ENCODE measurements at regions of chr12 and their contacts with region 1.

Region 1: DNA sequence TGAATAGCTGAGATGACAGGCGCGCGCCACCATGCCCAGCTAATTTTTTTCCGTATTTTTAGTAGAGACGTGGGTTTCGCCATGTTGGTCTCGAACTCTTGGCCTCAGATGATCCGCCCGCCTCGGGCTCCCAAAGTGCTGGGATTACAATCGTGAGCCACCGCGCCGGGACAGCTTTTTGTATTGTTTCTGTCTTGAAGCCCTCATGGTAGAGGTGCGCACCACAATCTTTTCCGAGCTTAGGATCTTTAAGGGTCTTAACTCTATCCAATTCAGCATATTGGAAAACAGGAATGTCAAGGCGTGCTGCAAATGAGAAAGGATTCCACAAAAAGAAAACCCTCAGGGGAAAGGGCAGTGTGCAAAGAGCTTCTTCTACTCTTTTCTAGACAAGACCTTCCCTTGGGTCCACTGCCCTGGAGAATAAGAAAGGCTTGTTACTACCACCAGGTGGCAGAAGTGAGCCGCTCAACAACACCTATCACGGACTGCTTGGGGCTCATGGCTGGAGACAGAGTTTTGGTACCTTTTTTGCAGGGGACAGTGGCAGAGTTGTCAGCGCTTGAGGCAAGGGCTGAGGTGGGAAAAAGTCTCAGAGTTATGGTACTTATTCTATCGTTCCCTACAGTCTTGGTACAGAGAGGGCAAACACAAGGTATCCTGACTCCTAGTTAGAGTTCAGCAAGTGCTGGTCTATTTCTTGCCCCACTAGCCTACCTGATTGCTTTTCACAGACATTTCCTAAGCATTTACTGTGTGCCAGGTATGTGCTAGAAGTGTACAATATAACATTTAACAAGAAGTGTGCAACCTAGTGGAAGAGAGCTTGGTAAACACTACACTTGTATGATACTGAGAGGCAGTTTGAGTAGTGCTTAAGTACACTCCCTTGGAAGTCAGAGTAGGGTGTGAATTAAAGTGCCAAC is 16.4 kb upstream of the SP7 start:
- DNase-seq: peak; percentile 84
- H3K4me3 ChIP-seq: no peak overlapping the region
- H3K27ac ChIP-seq: no peak overlapping the region
- H3K4me1 ChIP-seq: peaks cover 2% of the 10 kb centered on the region
- H3K27me3 ChIP-seq: no peaks in the 10 kb centered on the region
- CTCF ChIP-seq: peak; percentile 73 to 79
- POLR2A ChIP-seq: no peak

Region 2: DNA sequence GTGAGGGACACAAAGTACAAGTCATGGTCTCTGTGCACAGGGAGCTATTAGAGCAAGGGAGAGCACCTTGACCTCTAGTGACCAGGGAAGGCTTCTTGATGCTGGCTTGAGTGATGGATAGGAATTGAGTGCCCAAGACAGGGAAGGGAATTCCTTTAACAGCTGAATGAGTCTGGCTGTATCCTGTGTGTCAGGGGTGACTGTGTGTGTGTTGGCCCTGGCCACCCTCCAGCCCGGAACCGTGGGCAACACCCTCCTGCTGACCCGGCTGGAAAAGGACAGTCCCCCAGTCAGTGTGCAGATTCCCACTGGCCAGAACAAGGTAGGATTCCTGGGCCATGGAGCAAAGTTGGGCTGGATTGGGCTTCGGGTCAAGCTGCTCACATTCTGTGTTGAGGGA is 62.7 kb before region 1 on chr12:
- CTCF ChIA-PET with region 1: no interaction called
- POLR2A ChIA-PET with region 1: no interaction called
- dilution Hi-C with region 1: no loop called
- intact Hi-C with region 1: no loop called
- DNase-seq: peak; percentile 33
- H3K4me3 ChIP-seq: no peak overlapping the region
- H3K27ac ChIP-seq: peak overlapping the region; percentile 31
- H3K4me1 ChIP-seq: peaks cover 19% of the 10 kb centered on the region
- H3K27me3 ChIP-seq: no peaks in the 10 kb centered on the region
- CTCF ChIP-seq: no peak
- POLR2A ChIP-seq: no peak

Region 3: GRCh38 chr12:53327435-53328042 is 25.1 kb before region 1 on chr12:
- CTCF ChIA-PET with region 1: interaction called, 41 read pairs
- POLR2A ChIA-PET with region 1: no interaction called
- dilution Hi-C with region 1: no loop called
- intact Hi-C with region 1: no loop called
- DNase-seq: peak; percentile 21
- H3K4me3 ChIP-seq: no peak overlapping the region
- H3K27ac ChIP-seq: no peak overlapping the region
- H3K4me1 ChIP-seq: peaks cover 11% of the 10 kb centered on the region
- H3K27me3 ChIP-seq: peaks cover 0 to 6% of the 10 kb centered on the region in 2 experiments
- CTCF ChIP-seq: peak in 1 of 2 donors; percentile 27
- POLR2A ChIP-seq: no peak

Region 4: GRCh38 chr12:53365245-53365904 is 12.8 kb after region 1 on chr12:
- CTCF ChIA-PET with region 1: interaction called, 46 read pairs
- POLR2A ChIA-PET with region 1: no interaction called
- dilution Hi-C with region 1: no loop called
- intact Hi-C with region 1: no loop called
- DNase-seq: no peak
- H3K4me3 ChIP-seq: no peak overlapping the region
- H3K27ac ChIP-seq: no peak overlapping the region
- H3K4me1 ChIP-seq: peaks cover under 1% of the 10 kb centered on the region
- H3K27me3 ChIP-seq: no peaks in the 10 kb centered on the region
- CTCF ChIP-seq: no peak
- POLR2A ChIP-seq: no peak

Region 5: GRCh38 chr12:53402871-53403270 is 50.3 kb after region 1 on chr12:
- CTCF ChIA-PET with region 1: interaction called, 11 read pairs
- POLR2A ChIA-PET with region 1: no interaction called
- dilution Hi-C with region 1: no loop called
- intact Hi-C with region 1: no loop called
- DNase-seq: no peak
- H3K4me3 ChIP-seq: no peak overlapping the region
- H3K27ac ChIP-seq: no peak overlapping the region
- H3K4me1 ChIP-seq: no peaks in the 10 kb centered on the region
- H3K27me3 ChIP-seq: no peaks in the 10 kb centered on the region
- CTCF ChIP-seq: no peak
- POLR2A ChIP-seq: no peak

Region 6: DNA sequence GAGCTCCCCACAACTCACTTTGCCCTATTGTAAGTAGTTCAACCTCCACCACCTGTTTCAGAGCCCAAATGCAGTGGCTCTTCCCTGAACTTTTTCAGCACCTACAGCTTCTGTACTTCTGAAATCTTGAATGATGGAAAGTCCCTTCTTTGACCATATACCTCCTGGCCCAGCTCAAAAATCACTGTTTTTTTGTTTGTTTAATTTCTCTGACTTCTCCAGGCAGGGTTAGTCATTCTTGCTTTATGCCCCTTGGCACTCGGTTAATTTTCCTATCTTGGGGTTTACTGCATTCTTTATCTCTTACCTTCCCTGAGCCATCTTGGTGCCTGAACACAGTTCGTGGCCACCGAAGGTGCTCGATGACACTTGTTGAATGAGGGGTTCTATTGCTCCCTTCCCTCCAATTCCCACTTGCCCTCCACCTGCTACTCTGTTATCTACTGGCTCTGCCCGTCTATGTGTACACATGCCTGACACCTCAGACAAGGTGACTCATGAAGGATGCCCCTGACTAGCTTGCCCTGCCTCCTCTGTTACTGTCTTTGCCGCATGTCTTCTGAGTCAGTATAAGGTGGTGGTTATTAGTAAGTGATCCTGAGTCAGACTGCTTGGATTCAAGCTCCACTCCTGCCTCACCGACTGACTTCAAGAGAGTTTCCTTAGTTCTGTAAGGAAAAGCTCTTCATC is 75.5 kb after region 1 on chr12:
- CTCF ChIA-PET with region 1: interaction called, 444 read pairs
- POLR2A ChIA-PET with region 1: no interaction called
- dilution Hi-C with region 1: no loop called
- intact Hi-C with region 1: no loop called
- DNase-seq: no peak
- H3K4me3 ChIP-seq: no peak overlapping the region
- H3K27ac ChIP-seq: no peak overlapping the region
- H3K4me1 ChIP-seq: no peaks in the 10 kb centered on the region
- H3K27me3 ChIP-seq: no peaks in the 10 kb centered on the region
- CTCF ChIP-seq: no peak
- POLR2A ChIP-seq: no peak

Region 7: GRCh38 chr12:53476769-53477209 is 124.2 kb after region 1 on chr12:
- CTCF ChIA-PET with region 1: interaction called, 19 read pairs
- POLR2A ChIA-PET with region 1: no interaction called
- dilution Hi-C with region 1: no loop called
- intact Hi-C with region 1: no loop called
- DNase-seq: peak; percentile 36
- H3K4me3 ChIP-seq: no peak overlapping the region
- H3K27ac ChIP-seq: no peak overlapping the region
- H3K4me1 ChIP-seq: no peaks in the 10 kb centered on the region
- H3K27me3 ChIP-seq: no peaks in the 10 kb centered on the region
- CTCF ChIP-seq: peak; percentile 18 to 29
- POLR2A ChIP-seq: no peak

Measured in endothelial cell of umbilical vein (primary cell).